Activated naive CD4-positive, alpha-beta T cell treated with anti-CD3 and anti-CD28 coated beads for 36 hours (primary cell): ENCODE measurements at regions of chr1 and their contacts with region 1.

Region 1: GRCh38 chr1:29230553-29231378 is at the start of gene MECR:
- DNase-seq: peak; percentile 96
- H3K4me3 Mint-ChIP-seq: peak within 1 kb of the TSS; percentile 96
- H3K27ac Mint-ChIP-seq: peak within 1 kb of the TSS; percentile 80
- H3K4me1 Mint-ChIP-seq: peaks cover 11% of the 10 kb centered on the region
- H3K27me3 Mint-ChIP-seq: peaks cover 4% of the 10 kb centered on the region
- total RNA-seq, gene MECR: 35.7 to 36.3 TPM

Region 2: GRCh38 chr1:28983509-28984310 is 247.1 kb before region 1 on chr1:
- CTCF ChIA-PET with region 1: no interaction called
- intact Hi-C with region 1: no loop called
- DNase-seq: peak; percentile 8
- H3K4me3 Mint-ChIP-seq: no peak overlapping the region
- H3K27ac Mint-ChIP-seq: no peak overlapping the region
- H3K4me1 Mint-ChIP-seq: peaks cover 50% of the 10 kb centered on the region
- H3K27me3 Mint-ChIP-seq: no peaks in the 10 kb centered on the region

Region 3: GRCh38 chr1:29341936-29342335 is 111.2 kb after region 1 on chr1:
- CTCF ChIA-PET with region 1: no interaction called
- intact Hi-C with region 1: loop called (anchors 10 kb)
- DNase-seq: no peak
- H3K4me3 Mint-ChIP-seq: no peak overlapping the region
- H3K27ac Mint-ChIP-seq: no peak overlapping the region
- H3K4me1 Mint-ChIP-seq: no peaks in the 10 kb centered on the region
- H3K27me3 Mint-ChIP-seq: peaks cover 15% of the 10 kb centered on the region

Region 4: GRCh38 chr1:29706956-29707355 is 476.2 kb after region 1 on chr1:
- CTCF ChIA-PET with region 1: no interaction called
- intact Hi-C with region 1: loop called (anchors 10 kb)
- DNase-seq: peak; percentile 53
- H3K4me3 Mint-ChIP-seq: no peak overlapping the region
- H3K27ac Mint-ChIP-seq: no peak overlapping the region
- H3K4me1 Mint-ChIP-seq: peaks cover 27% of the 10 kb centered on the region
- H3K27me3 Mint-ChIP-seq: peaks cover 48% of the 10 kb centered on the region